CD4-positive, alpha-beta T cell (primary cell): ENCODE measurements at regions of chr12 and their contacts with region 1.

Region 1: DNA sequence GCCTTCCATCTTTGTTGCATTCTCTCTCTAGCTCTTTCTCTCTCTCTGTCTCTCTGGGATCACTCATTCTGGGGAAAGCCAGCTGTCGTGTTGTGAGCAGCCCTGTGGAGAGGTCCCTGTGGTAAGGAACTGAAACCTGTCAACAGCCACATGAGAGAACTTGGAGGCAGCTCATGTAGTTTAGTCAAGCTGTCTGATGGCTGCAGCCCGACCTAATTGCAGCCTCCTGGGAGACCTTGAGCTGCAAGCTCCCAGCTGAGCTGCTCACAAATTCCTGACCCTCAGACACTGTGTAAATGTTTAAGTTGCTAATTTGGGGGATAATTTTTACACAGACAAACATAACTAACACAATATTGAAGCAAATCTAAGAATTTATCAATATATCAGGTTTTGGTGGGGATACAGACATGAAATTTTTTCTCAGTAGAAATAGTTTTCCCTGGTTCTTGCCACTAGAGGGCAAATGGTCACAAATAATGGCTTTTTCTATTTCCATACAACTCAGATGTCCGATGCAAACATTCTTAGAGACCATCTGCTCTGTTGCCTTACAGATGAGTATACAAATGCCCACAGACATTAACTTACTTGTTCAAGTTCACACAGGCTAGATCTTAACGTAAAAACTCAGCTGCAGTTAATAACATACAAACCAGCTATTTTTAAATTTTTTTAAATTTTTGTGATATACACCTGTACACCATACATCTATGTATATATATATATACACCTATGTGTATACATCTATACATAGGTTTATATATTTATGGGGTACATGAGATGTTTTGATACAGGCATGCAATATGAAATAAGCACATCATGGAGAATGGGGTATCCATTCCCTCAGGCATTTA is 15.5 kb upstream of the KRR1 start:
- DNase-seq: peak in 3 of 14 experiments; percentile 55 to 57 (median 57)
- ATAC-seq: no peak
- H3K4me3 ChIP-seq: no peak overlapping the region
- H3K4me3 Mint-ChIP-seq: no peak overlapping the region
- H3K27ac ChIP-seq: no peak overlapping the region
- H3K27ac Mint-ChIP-seq: no peak overlapping the region
- H3K4me1 ChIP-seq: no peaks in the 10 kb centered on the region
- H3K4me1 Mint-ChIP-seq: no peaks in the 10 kb centered on the region
- H3K27me3 ChIP-seq: peaks cover 0 to 5% of the 10 kb centered on the region in 2 experiments
- H3K27me3 Mint-ChIP-seq: peaks cover 43% of the 10 kb centered on the region
- CTCF ChIP-seq: peak; percentile 63

Region 2: DNA sequence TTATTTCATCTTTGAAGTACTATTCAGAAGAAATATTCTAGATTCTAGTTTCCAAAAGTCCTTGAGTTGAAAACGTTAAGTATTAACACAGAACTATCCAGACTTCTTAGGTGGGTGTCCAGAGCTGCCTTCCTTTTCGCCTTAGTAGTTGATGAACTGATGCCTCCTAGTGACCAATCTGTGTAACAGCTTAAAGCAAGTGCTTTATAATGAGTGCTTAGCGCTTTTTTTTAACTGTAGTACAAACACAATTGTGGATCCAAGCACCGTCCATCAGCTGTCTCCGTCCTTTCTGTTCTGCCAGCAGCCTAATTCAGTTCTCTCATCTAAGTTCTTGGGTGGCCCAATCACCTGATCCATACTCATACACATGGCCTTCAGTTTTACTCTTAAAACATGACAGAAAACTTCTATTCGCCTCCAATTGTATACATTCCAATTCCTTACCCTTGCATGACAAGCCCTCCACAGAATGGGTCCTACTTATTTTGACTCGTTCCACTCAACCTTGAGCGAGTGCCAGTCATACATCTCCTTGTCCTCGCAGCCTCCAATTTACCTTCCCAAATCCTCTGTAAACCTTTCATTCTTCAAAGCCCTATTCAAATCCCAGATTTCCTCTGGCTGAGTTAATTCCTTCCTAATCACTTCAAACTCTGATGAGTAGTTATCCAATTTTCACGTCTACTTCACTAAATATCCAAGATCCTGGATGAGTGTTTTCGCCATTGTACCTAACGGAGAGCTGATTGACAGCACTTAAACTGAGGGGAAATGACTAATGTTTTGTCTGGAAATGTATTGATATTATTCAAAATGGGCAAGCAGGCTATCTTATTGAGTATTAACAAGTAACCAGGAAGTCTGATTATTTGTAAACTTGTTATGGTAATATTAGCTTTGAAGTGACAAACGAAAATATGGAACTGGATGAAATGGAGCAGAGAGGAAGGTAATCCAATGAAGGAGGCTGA is 510.5 kb after region 1 on chr12:
- CTCF ChIA-PET with region 1: interaction called, 13 read pairs
- POLR2A ChIA-PET with region 1: interaction called, 5 read pairs
- intact Hi-C with region 1: loop called (anchors 1 to 2 kb)
- DNase-seq: peak in 5 of 14 experiments; percentile 16 to 82 (median 75)
- ATAC-seq: peak; percentile 92
- H3K4me3 ChIP-seq: no peak overlapping the region
- H3K4me3 Mint-ChIP-seq: no peak overlapping the region
- H3K27ac ChIP-seq: no peak overlapping the region
- H3K27ac Mint-ChIP-seq: no peak overlapping the region
- H3K4me1 ChIP-seq: peaks cover 9% of the 10 kb centered on the region
- H3K4me1 Mint-ChIP-seq: peaks cover 14% of the 10 kb centered on the region
- H3K27me3 ChIP-seq: no peaks in the 10 kb centered on the region
- H3K27me3 Mint-ChIP-seq: no peaks in the 10 kb centered on the region
- CTCF ChIP-seq: peak; percentile 85

Region 3: GRCh38 chr12:76450690-76451089 is 923.8 kb after region 1 on chr12:
- CTCF ChIA-PET with region 1: no interaction called
- POLR2A ChIA-PET with region 1: no interaction called
- intact Hi-C with region 1: loop called (anchors 5 to 10 kb)
- DNase-seq: peak in 2 of 14 experiments; percentile 31 to 46
- ATAC-seq: no peak
- H3K4me3 ChIP-seq: no peak overlapping the region
- H3K4me3 Mint-ChIP-seq: no peak overlapping the region
- H3K27ac ChIP-seq: no peak overlapping the region
- H3K27ac Mint-ChIP-seq: no peak overlapping the region
- H3K4me1 ChIP-seq: no peaks in the 10 kb centered on the region
- H3K4me1 Mint-ChIP-seq: peaks cover 49% of the 10 kb centered on the region
- H3K27me3 ChIP-seq: no peaks in the 10 kb centered on the region
- H3K27me3 Mint-ChIP-seq: no peaks in the 10 kb centered on the region
- CTCF ChIP-seq: no peak

Region 4: GRCh38 chr12:76455582-76456345 is 928.9 kb after region 1 on chr12:
- CTCF ChIA-PET with region 1: no interaction called
- POLR2A ChIA-PET with region 1: no interaction called
- intact Hi-C with region 1: loop called (anchors 5 to 10 kb)
- DNase-seq: peak in 6 of 14 experiments; percentile 2 to 69 (median 40)
- ATAC-seq: peak; percentile 72
- H3K4me3 ChIP-seq: no peak overlapping the region
- H3K4me3 Mint-ChIP-seq: no peak overlapping the region
- H3K27ac ChIP-seq: no peak overlapping the region
- H3K27ac Mint-ChIP-seq: peak overlapping the region; percentile 84
- H3K4me1 ChIP-seq: peaks cover 14% of the 10 kb centered on the region
- H3K4me1 Mint-ChIP-seq: peaks cover 68% of the 10 kb centered on the region
- H3K27me3 ChIP-seq: no peaks in the 10 kb centered on the region
- H3K27me3 Mint-ChIP-seq: no peaks in the 10 kb centered on the region
- CTCF ChIP-seq: peak; percentile 71

Region 5: GRCh38 chr12:76586764-76587395 is 1060.0 kb after region 1 on chr12:
- CTCF ChIA-PET with region 1: no interaction called
- POLR2A ChIA-PET with region 1: no interaction called
- intact Hi-C with region 1: loop called in 1 of 2 experiments (anchors 5 kb)
- DNase-seq: peak in 12 of 14 experiments; percentile 4 to 74 (median 15)
- ATAC-seq: peak; percentile 83
- H3K4me3 ChIP-seq: no peak overlapping the region
- H3K4me3 Mint-ChIP-seq: no peak overlapping the region
- H3K27ac ChIP-seq: no peak overlapping the region
- H3K27ac Mint-ChIP-seq: no peak overlapping the region
- H3K4me1 ChIP-seq: no peaks in the 10 kb centered on the region
- H3K4me1 Mint-ChIP-seq: peaks cover 4% of the 10 kb centered on the region
- H3K27me3 ChIP-seq: no peaks in the 10 kb centered on the region
- H3K27me3 Mint-ChIP-seq: no peaks in the 10 kb centered on the region
- CTCF ChIP-seq: peak; percentile 86

Region 6: GRCh38 chr12:76790564-76791552 is 1264.0 kb after region 1 on chr12:
- CTCF ChIA-PET with region 1: no interaction called
- POLR2A ChIA-PET with region 1: no interaction called
- intact Hi-C with region 1: loop called in 1 of 2 experiments (anchors 5 kb)
- DNase-seq: peak in 3 of 14 experiments; percentile 48 to 58 (median 53)
- ATAC-seq: peak; percentile 58
- H3K4me3 ChIP-seq: no peak overlapping the region
- H3K4me3 Mint-ChIP-seq: no peak overlapping the region
- H3K27ac ChIP-seq: no peak overlapping the region
- H3K27ac Mint-ChIP-seq: peak overlapping the region; percentile 0
- H3K4me1 ChIP-seq: no peaks in the 10 kb centered on the region
- H3K4me1 Mint-ChIP-seq: peaks cover 50% of the 10 kb centered on the region
- H3K27me3 ChIP-seq: no peaks in the 10 kb centered on the region
- H3K27me3 Mint-ChIP-seq: no peaks in the 10 kb centered on the region
- CTCF ChIP-seq: peak; percentile 87